ENCODE measurements at regions of chr2 and their contacts with region 1.

Region 1: DNA sequence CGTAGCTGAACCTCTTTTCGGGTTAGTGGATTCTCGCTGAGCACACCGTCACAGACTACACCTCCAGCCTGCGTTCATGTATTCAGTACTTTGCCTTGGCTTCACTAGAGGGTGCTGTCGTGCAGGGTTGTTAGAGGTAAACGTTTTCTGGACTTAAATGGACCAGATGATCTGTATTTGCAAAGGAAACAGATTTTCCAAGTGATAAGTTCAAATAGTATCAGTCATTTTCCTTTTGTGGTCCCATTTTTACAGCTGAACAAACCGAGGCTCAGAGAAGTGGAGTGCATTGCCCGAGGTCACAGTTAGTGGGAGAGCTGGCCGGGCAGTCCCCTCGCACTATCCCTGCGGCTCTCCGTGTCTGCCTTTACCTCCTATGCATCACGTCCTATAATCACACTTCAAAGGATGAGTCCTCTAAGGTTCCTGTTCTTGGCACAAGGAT is 125.9 kb downstream of the MAP4K4 start:
- DNase-seq: peak; percentile 81
- H3K4me3 Mint-ChIP-seq: peak overlapping the region; percentile 48
- H3K27ac Mint-ChIP-seq: peak overlapping the region; percentile 72
- H3K4me1 Mint-ChIP-seq: peaks cover 68% of the 10 kb centered on the region
- H3K27me3 Mint-ChIP-seq: no peaks in the 10 kb centered on the region

Region 2: GRCh38 chr2:101770726-101771125 is 52.6 kb before region 1 on chr2:
- CTCF ChIA-PET with region 1: interaction called, 30 read pairs
- POLR2A ChIA-PET with region 1: no interaction called
- intact Hi-C with region 1: loop called (anchors 1 kb)
- DNase-seq: peak; percentile 21
- H3K4me3 Mint-ChIP-seq: no peak overlapping the region
- H3K27ac Mint-ChIP-seq: no peak overlapping the region
- H3K4me1 Mint-ChIP-seq: peaks cover 82% of the 10 kb centered on the region
- H3K27me3 Mint-ChIP-seq: no peaks in the 10 kb centered on the region

Region 3: GRCh38 chr2:103028181-103028580 is 1204.8 kb after region 1 on chr2:
- CTCF ChIA-PET with region 1: no interaction called
- POLR2A ChIA-PET with region 1: no interaction called
- intact Hi-C with region 1: no loop called
- DNase-seq: no peak
- H3K4me3 Mint-ChIP-seq: no peak overlapping the region
- H3K27ac Mint-ChIP-seq: no peak overlapping the region
- H3K4me1 Mint-ChIP-seq: no peaks in the 10 kb centered on the region
- H3K27me3 Mint-ChIP-seq: no peaks in the 10 kb centered on the region

Measured in activated CD4-positive, alpha-beta memory T cell treated with anti-CD3 and anti-CD28 coated beads for 36 hours (primary cell).